MCF 10A (cell line): ENCODE measurements at regions of chr5 and their contacts with region 1.

Region 1: GRCh38 chr5:129652349-129653069 is 95.4 kb upstream of the MINAR2 start:
- DNase-seq: peak; percentile 92
- H3K4me3 Mint-ChIP-seq: no peak overlapping the region
- H3K27ac Mint-ChIP-seq: peak overlapping the region; percentile 38
- H3K4me1 Mint-ChIP-seq: peaks cover 9% of the 10 kb centered on the region
- H3K27me3 Mint-ChIP-seq: no peaks in the 10 kb centered on the region
- CTCF ChIP-seq: no peak

Region 2: DNA sequence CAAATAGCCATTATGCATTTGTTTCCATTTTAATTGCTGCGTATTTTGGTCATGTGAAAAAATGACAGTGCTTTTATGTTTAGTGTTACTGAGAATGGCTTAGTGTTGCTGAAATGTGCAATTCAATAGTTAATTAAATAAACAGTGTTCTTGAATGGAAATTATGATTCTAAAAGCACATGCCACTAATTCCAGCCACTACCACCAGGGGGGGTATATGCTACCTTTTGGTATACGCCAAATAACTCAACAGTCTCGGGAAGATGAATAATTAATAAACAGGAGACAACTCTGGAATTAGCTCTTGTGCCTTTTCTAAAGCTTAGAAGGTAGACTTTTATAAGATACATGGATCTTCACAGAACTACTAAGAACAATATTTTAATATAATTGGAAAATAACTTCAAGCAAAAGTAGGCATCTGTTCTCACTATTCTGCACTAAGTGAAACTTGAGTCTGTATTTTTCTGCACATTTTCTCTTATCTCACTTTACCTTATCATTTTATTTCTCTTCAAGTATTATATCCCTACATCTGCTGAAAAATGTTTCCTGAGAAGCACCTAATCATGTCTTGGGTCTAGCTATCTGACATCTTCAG is 11.9 kb after region 1 on chr5:
- CTCF ChIA-PET with region 1: interaction called, 28 read pairs
- POLR2A ChIA-PET with region 1: interaction called, 3 read pairs
- intact Hi-C with region 1: no loop called
- DNase-seq: peak; percentile 83
- H3K4me3 Mint-ChIP-seq: no peak overlapping the region
- H3K27ac Mint-ChIP-seq: no peak overlapping the region
- H3K4me1 Mint-ChIP-seq: no peaks in the 10 kb centered on the region
- H3K27me3 Mint-ChIP-seq: no peaks in the 10 kb centered on the region
- CTCF ChIP-seq: peak; percentile 89

Region 3: GRCh38 chr5:129743541-129744187 is 91.2 kb after region 1 on chr5:
- CTCF ChIA-PET with region 1: no interaction called
- POLR2A ChIA-PET with region 1: no interaction called
- intact Hi-C with region 1: no loop called
- DNase-seq: no peak
- H3K4me3 Mint-ChIP-seq: no peak overlapping the region
- H3K27ac Mint-ChIP-seq: no peak overlapping the region
- H3K4me1 Mint-ChIP-seq: no peaks in the 10 kb centered on the region
- H3K27me3 Mint-ChIP-seq: peaks cover 36% of the 10 kb centered on the region
- CTCF ChIP-seq: no peak